ENCODE measurements at regions of chr6 and their contacts with region 1.

Region 1: DNA sequence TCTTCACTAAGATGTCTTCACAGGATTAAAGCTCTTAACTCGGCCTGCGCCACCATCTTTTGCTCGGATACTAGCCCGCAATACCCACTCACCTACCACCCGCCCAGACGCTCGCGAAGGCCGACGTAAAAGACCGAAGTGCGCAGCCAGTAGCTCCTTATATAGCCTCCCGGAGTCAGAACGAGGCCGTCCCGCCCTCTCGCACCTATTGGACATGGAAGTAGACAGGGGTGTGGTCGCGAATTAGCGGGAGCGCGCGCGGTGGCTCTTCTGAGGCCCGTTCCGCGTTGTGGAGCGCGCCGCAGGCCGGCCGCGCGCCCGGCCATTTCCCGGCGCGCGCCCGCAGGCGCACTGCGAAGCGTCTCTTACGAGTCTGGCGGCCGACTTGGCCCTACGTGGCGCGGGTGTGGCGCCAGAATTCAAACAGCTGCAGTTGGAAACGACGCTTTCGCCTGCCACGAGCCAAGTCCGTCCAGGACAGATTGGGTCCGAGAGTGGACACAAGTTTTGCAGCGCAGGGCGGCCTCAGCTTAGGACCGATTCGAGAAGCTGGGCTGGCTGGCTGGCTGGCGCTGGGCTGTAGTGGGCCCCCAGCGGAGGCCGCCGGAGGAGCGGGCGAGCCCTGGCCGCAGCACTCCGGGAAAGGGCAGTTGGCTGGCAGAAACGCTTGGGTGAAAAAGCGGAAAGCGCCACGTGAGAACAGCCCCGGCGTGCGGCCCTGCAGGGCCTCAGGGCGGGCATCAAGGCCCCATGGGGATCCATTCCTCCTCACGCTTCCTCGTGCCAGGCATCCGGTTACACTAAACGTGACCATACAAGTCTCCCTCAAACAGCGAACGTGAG is 36.1 kb upstream of the SYNCRIP start:
- DNase-seq: peak; percentile 99
- H3K4me3 ChIP-seq: peak overlapping the region; percentile 73 to 92 (median 90)
- H3K27ac ChIP-seq: peak overlapping the region; percentile 80
- H3K4me1 ChIP-seq: peaks cover 22% of the 10 kb centered on the region
- H3K27me3 ChIP-seq: no peaks in the 10 kb centered on the region
- CTCF ChIP-seq: peak in 1 of 2 donors; percentile 2

Region 2: GRCh38 chr6:85354761-85355618 is 323.8 kb before region 1 on chr6:
- CTCF ChIA-PET with region 1: no interaction called
- dilution Hi-C with region 1: no loop called
- in situ Hi-C with region 1: no loop called
- intact Hi-C with region 1: loop called (anchors 5 kb)
- DNase-seq: peak; percentile 64
- H3K4me3 ChIP-seq: no peak overlapping the region
- H3K27ac ChIP-seq: no peak overlapping the region
- H3K4me1 ChIP-seq: peaks cover 6% of the 10 kb centered on the region
- H3K27me3 ChIP-seq: no peaks in the 10 kb centered on the region
- CTCF ChIP-seq: peak; percentile 91 to 96

Region 3: GRCh38 chr6:85593438-85594196 is 85.2 kb before region 1 on chr6 and contains the start of gene SNX14:
- CTCF ChIA-PET with region 1: no interaction called
- dilution Hi-C with region 1: loop called (anchors 5 kb)
- in situ Hi-C with region 1: no loop called
- intact Hi-C with region 1: loop called (anchors 5 kb)
- DNase-seq: peak; percentile 93
- H3K4me3 ChIP-seq: peak within 1 kb of the TSS; percentile 87 to 94 (median 88)
- H3K27ac ChIP-seq: peak within 1 kb of the TSS; percentile 79
- H3K4me1 ChIP-seq: peaks cover 4% of the 10 kb centered on the region
- H3K27me3 ChIP-seq: no peaks in the 10 kb centered on the region
- CTCF ChIP-seq: peak in 1 of 2 donors; percentile 1
- total RNA-seq, gene SNX14: 76.8 to 87.6 TPM

Region 4: DNA sequence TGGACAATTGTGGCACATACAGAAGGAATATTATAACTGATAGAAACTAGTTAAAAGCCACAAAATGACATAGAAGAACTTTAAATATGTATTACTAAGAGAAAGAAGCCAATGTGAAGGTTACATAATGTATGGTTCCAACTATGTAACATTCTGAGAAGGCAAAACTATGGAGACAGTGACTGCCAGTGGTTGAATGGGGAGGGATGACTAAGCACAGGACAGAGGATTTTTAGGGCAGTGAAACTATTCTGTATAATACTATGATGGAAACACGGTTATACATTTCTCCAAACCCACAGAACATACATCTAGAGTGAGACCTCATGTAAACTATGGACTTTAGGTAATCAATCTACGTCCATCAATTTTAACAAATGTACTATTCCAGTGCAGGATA is 58.5 kb before region 1 on chr6:
- CTCF ChIA-PET with region 1: no interaction called
- dilution Hi-C with region 1: no loop called
- in situ Hi-C with region 1: no loop called
- intact Hi-C with region 1: loop called (anchors 10 kb)
- DNase-seq: no peak
- H3K4me3 ChIP-seq: no peak overlapping the region
- H3K27ac ChIP-seq: no peak overlapping the region
- H3K4me1 ChIP-seq: no peaks in the 10 kb centered on the region
- H3K27me3 ChIP-seq: no peaks in the 10 kb centered on the region
- CTCF ChIP-seq: no peak